CD8-positive, alpha-beta T cell (primary cell): ENCODE measurements at regions of chr2 and their contacts with region 1.

Region 1: DNA sequence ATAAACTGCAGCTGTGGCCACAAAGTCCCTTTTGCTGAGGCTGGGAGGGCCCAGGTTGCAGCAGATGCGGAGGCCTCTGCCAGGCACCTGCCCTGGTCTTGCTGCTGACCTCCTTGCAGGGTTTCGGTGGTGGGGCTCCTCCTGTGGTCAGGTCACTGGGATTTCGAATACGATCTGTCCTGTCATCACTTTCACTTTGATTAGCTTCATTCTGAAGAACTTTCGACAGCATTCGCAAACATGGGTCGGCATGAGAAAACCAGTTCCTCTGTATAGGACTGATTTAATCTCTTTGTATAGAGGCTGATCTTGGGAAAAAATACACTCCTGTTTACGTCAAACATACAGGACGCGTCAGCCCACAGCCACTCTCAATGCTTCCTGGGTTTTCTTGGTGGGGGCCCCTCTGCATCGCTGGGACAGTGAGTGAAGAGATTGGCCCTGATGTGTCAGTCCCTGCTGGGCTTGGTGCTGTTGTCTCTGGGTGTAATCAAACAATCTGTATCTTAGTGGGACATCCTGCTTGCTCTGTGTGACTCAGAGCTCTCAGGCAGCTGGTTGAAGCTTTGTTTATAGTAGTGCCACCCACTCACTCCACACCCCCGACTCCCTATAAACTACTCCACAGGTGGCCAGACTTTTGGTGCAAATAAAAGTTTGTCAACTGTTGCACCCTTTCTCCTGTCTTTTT is 209.4 kb upstream of the CXCR4 start:
- DNase-seq: peak; percentile 61 to 96 (median 82)
- ATAC-seq: peak; percentile 93
- H3K4me3 ChIP-seq: peak overlapping the region; percentile 24 to 26
- H3K4me3 Mint-ChIP-seq: peak overlapping the region; percentile 72
- H3K27ac ChIP-seq: peak overlapping the region; percentile 59 to 83
- H3K27ac Mint-ChIP-seq: peak overlapping the region; percentile 94
- H3K4me1 ChIP-seq: peaks cover 43% of the 10 kb centered on the region
- H3K4me1 Mint-ChIP-seq: peaks cover 62% of the 10 kb centered on the region
- H3K27me3 ChIP-seq: no peaks in the 10 kb centered on the region
- H3K27me3 Mint-ChIP-seq: no peaks in the 10 kb centered on the region
- CTCF ChIP-seq: no peak

Region 2: GRCh38 chr2:136052369-136053362 is 274.6 kb before region 1 on chr2:
- CTCF ChIA-PET with region 1: no interaction called
- POLR2A ChIA-PET with region 1: no interaction called
- intact Hi-C with region 1: loop called in 1 of 2 experiments (anchors 5 kb)
- DNase-seq: peak in 2 of 9 experiments; percentile 39 to 60
- ATAC-seq: peak; percentile 22
- H3K4me3 ChIP-seq: no peak overlapping the region
- H3K4me3 Mint-ChIP-seq: peak overlapping the region; percentile 38
- H3K27ac ChIP-seq: peak overlapping the region; percentile 23 to 45
- H3K27ac Mint-ChIP-seq: peak overlapping the region; percentile 86
- H3K4me1 ChIP-seq: peaks cover 88% of the 10 kb centered on the region
- H3K4me1 Mint-ChIP-seq: peaks cover 82% of the 10 kb centered on the region
- H3K27me3 ChIP-seq: no peaks in the 10 kb centered on the region
- H3K27me3 Mint-ChIP-seq: no peaks in the 10 kb centered on the region
- CTCF ChIP-seq: no peak

Region 3: DNA sequence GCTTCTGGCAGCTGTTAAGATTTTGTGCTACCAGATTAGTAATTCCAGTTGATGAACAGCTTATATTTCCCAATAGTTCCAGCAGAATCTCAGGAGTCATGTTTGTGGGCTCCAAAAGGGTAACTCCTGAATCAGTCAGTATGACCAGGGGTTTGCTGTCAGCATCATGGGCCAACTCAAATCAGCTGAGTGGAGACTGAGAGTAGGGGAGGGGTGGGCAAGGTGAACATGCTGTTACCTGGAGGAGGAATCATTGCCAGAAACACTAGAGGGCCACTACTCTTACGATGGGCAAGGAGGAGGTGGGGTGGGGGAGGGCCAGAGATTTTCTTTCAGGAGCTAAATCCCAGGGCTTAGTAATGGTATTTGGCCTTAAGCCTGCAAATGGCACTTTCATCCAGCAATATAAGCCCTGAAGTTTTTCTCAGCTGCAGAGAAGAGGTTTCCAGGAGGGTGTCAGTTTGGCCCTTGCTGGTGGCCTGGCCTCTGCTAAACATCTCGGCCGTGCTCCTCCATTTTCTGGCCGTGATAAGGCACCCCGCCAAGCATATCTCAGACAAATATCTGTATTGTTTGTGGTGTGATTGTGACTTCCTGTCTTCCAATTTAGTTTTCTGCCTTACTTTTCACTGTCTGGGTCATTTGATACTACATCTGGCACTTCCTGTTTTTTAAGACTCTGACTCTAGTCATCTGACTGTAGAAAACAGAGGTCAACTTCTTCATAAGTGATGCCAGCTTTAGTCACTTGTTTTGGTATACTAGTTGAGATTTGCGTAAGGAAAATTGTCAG is 88.8 kb before region 1 on chr2:
- CTCF ChIA-PET with region 1: interaction called, 5 read pairs
- POLR2A ChIA-PET with region 1: interaction called, 10 read pairs
- intact Hi-C with region 1: loop called (anchors 1 kb)
- DNase-seq: peak; percentile 29 to 89 (median 65)
- ATAC-seq: peak; percentile 75
- H3K4me3 ChIP-seq: peak overlapping the region in 1 of 2 experiments; percentile 13
- H3K4me3 Mint-ChIP-seq: peak overlapping the region; percentile 30
- H3K27ac ChIP-seq: peak overlapping the region; percentile 64 to 83
- H3K27ac Mint-ChIP-seq: peak overlapping the region; percentile 91
- H3K4me1 ChIP-seq: peaks cover 31% of the 10 kb centered on the region
- H3K4me1 Mint-ChIP-seq: peaks cover 56% of the 10 kb centered on the region
- H3K27me3 ChIP-seq: no peaks in the 10 kb centered on the region
- H3K27me3 Mint-ChIP-seq: no peaks in the 10 kb centered on the region
- CTCF ChIP-seq: no peak

Region 4: DNA sequence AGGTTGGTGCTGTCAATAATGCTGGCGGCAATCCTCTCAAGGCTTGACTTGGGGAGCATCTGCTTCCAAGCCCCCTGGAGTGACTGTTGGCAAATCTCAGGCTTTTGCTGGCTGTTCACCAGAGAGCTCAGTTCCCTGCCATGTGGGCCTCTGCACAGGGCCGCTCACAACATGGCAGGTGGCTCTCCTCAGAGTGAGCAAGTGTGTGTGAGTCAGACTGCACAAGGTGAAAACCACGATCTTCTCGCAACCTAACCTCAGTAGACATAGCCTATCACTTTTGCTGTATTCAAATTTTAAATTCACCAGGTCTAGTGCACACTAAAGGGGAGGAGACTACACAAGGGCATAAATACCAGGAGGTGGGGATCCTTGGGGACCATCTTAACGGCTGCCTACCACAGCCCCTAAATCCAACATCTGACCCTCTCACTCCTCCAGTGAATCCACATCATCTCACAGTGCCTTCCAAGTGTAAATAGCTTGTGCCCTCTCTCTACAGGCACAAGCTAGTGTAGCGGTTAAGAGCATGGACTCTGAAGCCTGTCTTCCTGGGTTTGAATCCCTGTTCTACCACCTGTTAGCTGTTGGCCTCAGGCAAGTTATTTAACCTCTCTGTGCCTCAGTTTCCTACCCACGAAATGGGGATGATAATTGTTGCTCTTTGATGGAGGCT is 21.7 kb before region 1 on chr2:
- CTCF ChIA-PET with region 1: no interaction called
- POLR2A ChIA-PET with region 1: interaction called, 8 read pairs
- intact Hi-C with region 1: loop called in 1 of 2 experiments (anchors 2 kb)
- DNase-seq: peak; percentile 6 to 86 (median 54)
- ATAC-seq: peak; percentile 99
- H3K4me3 ChIP-seq: no peak overlapping the region
- H3K4me3 Mint-ChIP-seq: no peak overlapping the region
- H3K27ac ChIP-seq: no peak overlapping the region
- H3K27ac Mint-ChIP-seq: peak overlapping the region; percentile 78
- H3K4me1 ChIP-seq: peaks cover 6% of the 10 kb centered on the region
- H3K4me1 Mint-ChIP-seq: peaks cover 16% of the 10 kb centered on the region
- H3K27me3 ChIP-seq: no peaks in the 10 kb centered on the region
- H3K27me3 Mint-ChIP-seq: no peaks in the 10 kb centered on the region
- CTCF ChIP-seq: no peak

Region 5: DNA sequence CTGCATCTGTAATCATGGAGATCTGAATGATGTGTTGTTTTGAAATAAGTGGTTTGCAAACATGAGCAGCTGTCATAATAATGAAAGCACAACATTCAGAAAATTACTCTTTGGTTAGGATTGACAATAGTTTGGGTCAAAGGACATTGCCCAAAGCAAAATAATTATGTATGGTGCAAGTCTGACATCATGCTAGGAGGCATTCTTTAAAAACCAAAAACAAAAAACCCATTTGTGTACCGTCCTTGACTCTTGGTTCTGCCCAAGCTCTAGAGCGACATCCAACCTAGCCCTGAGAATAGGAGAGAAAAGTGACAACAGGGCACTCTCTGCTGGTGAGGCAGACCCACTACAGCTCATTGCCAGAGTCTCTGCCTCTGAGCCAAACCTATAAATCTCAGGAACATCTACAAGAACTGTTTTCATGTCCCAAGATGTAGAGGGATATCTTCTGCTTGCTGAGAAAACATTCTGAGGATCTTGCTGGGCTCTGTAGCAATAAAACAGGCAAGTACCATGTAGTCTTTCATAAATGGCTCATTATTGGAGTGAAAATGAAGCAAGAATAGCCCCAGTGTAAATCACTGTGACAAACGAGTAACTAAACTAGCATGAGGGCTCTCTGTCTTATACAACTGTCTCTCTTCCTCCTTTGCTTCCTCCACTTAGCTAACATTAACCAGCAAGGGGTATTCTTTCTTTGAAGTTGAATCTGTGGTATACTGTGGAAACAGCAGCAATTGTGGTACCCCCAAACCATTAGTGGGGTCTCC is 57.4 kb after region 1 on chr2:
- CTCF ChIA-PET with region 1: interaction called, 6 read pairs
- POLR2A ChIA-PET with region 1: interaction called, 4 read pairs
- intact Hi-C with region 1: loop called in 1 of 2 experiments (anchors 1 kb)
- DNase-seq: peak in 8 of 9 experiments; percentile 32 to 82 (median 60)
- ATAC-seq: peak; percentile 53
- H3K4me3 ChIP-seq: no peak overlapping the region
- H3K4me3 Mint-ChIP-seq: no peak overlapping the region
- H3K27ac ChIP-seq: no peak overlapping the region
- H3K27ac Mint-ChIP-seq: peak overlapping the region; percentile 69
- H3K4me1 ChIP-seq: peaks cover 25% of the 10 kb centered on the region
- H3K4me1 Mint-ChIP-seq: peaks cover 36% of the 10 kb centered on the region
- H3K27me3 ChIP-seq: no peaks in the 10 kb centered on the region
- H3K27me3 Mint-ChIP-seq: no peaks in the 10 kb centered on the region
- CTCF ChIP-seq: peak; percentile 77